HepG2 (cell line): ENCODE measurements at regions of chr19 and their contacts with region 1.

Region 1: DNA sequence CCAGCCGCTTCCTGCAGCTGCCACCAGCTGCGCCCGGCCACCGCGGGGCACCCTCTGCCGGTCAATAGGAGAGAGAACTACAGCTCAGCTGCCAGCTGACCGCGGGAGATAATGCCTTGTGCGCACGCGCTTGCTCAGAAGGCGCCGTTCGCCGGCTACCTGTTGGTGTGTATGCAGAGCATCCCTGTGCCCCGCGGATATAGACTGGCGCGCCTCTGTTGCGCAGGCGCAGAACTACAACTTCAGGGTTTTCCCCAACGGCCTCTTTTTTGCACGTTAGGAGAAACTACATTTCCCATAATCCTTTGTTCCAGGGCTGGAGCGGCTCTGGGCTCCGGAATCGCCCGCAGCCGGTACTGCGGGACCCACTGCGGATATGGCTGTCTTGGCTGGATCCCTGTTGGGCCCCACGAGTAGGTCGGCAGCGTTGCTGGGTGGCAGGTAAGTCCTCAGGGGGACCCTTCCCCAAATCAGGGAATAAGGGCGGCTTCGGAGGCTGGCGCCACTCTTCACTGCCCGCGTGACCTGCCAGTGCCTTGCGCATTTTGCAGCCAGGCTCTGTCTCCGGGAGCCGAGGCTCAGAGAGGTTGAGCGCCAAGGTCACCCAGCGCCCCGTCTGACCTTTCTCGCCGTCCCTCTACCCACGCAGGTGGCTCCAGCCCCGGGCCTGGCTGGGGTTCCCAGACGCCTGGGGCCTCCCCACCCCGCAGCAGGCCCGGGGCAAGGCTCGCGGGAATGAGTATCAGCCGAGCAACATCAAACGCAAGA is at the start of gene MRPL34:
- DNase-seq: peak; percentile 99
- ATAC-seq: peak; percentile 70
- H3K4me3 ChIP-seq: peak within 1 kb of the TSS; percentile 60 to 87 (median 85)
- H3K27ac ChIP-seq: peak within 1 kb of the TSS; percentile 91
- H3K4me1 ChIP-seq: peaks cover 40% of the 10 kb centered on the region
- H3K27me3 ChIP-seq: no peaks in the 10 kb centered on the region; a peak in 1 of 5 replicates
- CTCF ChIP-seq: peak; percentile 96
- EP300 ChIP-seq: no peak
- POLR2A ChIP-seq: peak; percentile 61 to 76; a peak in 3 of 4 replicates
- RAD21 ChIP-seq: peak; percentile 89
- total RNA-seq, gene MRPL34: 77.3 and 93.6 TPM in 2 replicates

Region 2: DNA sequence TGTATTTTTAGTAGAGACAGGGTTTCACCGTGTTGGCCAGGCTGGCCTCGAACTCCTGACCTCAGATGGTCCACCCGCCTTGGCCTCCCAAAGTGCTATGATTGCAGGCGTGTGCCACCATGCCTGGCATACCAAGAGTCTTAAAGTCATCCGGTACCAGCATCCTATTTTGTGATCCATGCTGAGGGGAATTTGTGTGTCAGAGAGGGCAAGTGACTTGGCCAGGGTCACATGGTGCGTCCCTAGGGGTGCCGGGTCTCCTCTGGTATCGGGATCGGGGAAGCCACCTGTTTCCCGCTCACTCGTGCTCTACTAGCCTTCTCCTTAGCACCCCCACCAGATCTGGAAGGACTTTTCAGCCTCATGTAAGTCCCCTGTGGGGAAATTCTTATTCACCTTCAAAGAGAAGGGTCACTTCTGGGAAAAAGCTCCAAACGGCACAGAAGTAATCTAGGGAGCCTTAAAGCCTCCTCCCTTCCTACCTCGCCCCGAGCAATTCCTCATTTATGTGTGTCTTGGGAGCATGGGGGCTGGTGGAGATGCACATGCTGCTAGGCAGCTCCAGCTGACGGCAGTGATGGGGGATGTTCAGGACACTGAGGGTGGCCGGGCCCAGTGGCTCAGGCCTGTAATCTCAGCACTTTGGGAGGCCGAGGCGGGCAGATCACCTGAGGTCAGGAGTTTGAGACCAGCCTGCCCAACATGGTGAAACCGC is 30.1 kb before region 1 on chr19:
- CTCF ChIA-PET with region 1: no interaction called
- POLR2A ChIA-PET with region 1: no interaction called
- in situ Hi-C with region 1: no loop called
- intact Hi-C with region 1: no loop called
- DNase-seq: no peak
- ATAC-seq: no peak
- H3K4me3 ChIP-seq: no peak overlapping the region
- H3K27ac ChIP-seq: no peak overlapping the region
- H3K4me1 ChIP-seq: no peaks in the 10 kb centered on the region
- H3K27me3 ChIP-seq: no peaks in the 10 kb centered on the region
- CTCF ChIP-seq: no peak
- EP300 ChIP-seq: no peak
- POLR2A ChIP-seq: no peak
- RAD21 ChIP-seq: no peak

Region 3: GRCh38 chr19:17318966-17319365 is 13.3 kb after region 1 on chr19:
- CTCF ChIA-PET with region 1: no interaction called
- POLR2A ChIA-PET with region 1: interaction called, 11 read pairs
- in situ Hi-C with region 1: no loop called
- intact Hi-C with region 1: no loop called
- DNase-seq: no peak
- ATAC-seq: no peak
- H3K4me3 ChIP-seq: no peak overlapping the region
- H3K27ac ChIP-seq: no peak overlapping the region
- H3K4me1 ChIP-seq: no peaks in the 10 kb centered on the region
- H3K27me3 ChIP-seq: no peaks in the 10 kb centered on the region
- CTCF ChIP-seq: no peak
- EP300 ChIP-seq: no peak
- POLR2A ChIP-seq: no peak
- RAD21 ChIP-seq: no peak

Region 4: GRCh38 chr19:17336872-17337722 is 31.4 kb after region 1 on chr19 and contains the start of gene GTPBP3:
- CTCF ChIA-PET with region 1: no interaction called
- POLR2A ChIA-PET with region 1: interaction called, 37 read pairs
- in situ Hi-C with region 1: no loop called
- intact Hi-C with region 1: loop called (anchors 2 kb)
- DNase-seq: peak; percentile 99
- ATAC-seq: peak; percentile 79
- H3K4me3 ChIP-seq: peak within 1 kb of the TSS; percentile 88 to 92 (median 90)
- H3K27ac ChIP-seq: peak within 1 kb of the TSS; percentile 88
- H3K4me1 ChIP-seq: peaks cover 65% of the 10 kb centered on the region
- H3K27me3 ChIP-seq: no peaks in the 10 kb centered on the region; a peak in 1 of 5 replicates
- CTCF ChIP-seq: no peak
- EP300 ChIP-seq: 0 out of 4 replicates have a peak, but pooled peaks of 1 of the 2 experiments have one; percentile 12
- POLR2A ChIP-seq: peak; percentile 54 to 89
- RAD21 ChIP-seq: no peak
- total RNA-seq, gene GTPBP3: 21.9 and 30.0 TPM in 2 replicates

Region 5: DNA sequence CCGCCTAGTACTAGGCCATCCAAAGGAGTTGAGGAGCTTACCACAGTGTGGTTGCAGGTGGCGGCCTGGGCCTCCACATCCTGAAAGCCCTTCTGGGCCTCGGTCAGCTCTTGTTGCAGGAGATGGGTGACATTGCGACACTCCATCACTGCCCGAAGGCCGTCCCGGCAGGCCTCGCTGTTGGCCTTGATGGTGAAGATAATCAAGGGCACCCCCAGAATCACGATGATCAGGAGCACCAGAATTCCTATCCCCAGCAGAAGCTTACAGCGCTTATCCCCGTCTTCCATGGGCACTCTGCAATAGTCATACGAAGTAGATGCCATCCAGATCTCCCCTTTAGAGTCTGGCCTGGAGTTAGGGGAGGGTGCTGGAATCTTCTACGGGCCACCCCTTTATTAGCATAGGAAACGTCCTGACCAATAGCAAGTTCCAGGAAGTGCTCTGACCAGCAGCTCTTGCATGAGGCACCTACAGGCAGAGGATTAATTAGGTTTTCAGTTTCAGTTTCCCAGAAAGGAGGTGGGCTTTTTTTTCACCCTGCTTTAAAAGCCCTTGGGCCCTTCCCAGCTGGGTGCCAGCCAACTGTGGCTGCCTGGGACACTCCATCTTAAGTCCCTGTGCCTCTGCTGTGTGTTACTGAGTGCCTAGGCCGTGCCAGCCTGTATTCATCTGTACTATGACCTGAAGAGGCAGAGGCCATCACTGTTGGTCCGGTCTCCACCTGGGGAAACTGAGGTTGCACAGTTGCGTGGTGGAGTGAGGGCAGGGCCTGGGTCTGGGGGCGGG is 99.7 kb after region 1 on chr19 and contains the start of gene BST2:
- CTCF ChIA-PET with region 1: no interaction called
- POLR2A ChIA-PET with region 1: interaction called, 10 read pairs
- in situ Hi-C with region 1: no loop called
- intact Hi-C with region 1: no loop called
- DNase-seq: peak; percentile 93
- ATAC-seq: peak; percentile 94
- H3K4me3 ChIP-seq: peak within 1 kb of the TSS; percentile 62 to 82 (median 70)
- H3K27ac ChIP-seq: peak within 1 kb of the TSS; percentile 81
- H3K4me1 ChIP-seq: peaks cover 13% of the 10 kb centered on the region
- H3K27me3 ChIP-seq: no peaks in the 10 kb centered on the region; a peak in 1 of 5 replicates
- CTCF ChIP-seq: no peak
- EP300 ChIP-seq: no peak
- POLR2A ChIP-seq: peak in 1 of 2 experiments; percentile 78; a peak in 3 of 4 replicates
- RAD21 ChIP-seq: no peak
- total RNA-seq, gene BST2: 39.1 and 58.8 TPM in 2 replicates